HEK293T (cell line): ENCODE measurements at regions of chr5 and their contacts with region 1.

Region 1: GRCh38 chr5:149828161-149828884 is 98.2 kb downstream of the PPARGC1B start:
- DNase-seq: peak; percentile 78

Region 2: GRCh38 chr5:149636851-149637246 is 191.5 kb before region 1 on chr5:
- CTCF ChIA-PET with region 1: interaction called, 19 read pairs
- POLR2A ChIA-PET with region 1: no interaction called
- DNase-seq: peak; percentile 76

Region 3: DNA sequence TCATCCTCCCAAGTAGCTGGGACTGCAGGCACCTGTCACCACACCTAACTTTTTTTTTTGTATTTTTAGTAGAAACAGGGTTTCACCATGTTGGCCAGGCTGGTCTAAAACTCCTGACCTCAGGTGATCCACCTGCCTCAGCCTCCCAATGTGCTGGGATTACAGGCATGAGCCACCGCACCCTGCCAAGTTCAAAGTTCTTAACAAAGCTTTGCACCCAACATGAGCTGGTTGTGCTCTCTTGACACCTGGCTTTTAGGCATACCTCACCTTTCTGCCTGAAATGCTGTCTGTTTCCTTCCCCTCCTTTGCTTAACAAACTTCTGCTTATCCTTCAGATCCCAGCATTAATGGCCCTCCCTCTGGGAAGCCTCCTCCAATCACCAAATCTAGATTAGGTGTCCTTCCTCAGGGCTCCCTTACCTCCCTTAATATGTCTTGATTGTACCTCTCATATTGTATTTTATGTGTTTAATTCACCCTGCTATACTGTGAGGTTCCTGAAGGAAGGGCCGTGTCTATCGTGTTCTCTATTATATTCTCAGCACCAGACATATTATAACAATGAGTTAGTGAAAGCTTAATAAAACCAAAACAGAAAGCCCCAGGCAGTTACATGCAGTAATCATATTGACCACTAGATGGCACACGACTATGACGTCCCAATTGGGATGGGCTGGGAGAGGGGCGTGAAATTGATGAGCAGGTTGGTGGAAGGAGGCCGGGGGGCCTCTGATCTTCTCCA is 161.1 kb before region 1 on chr5:
- CTCF ChIA-PET with region 1: interaction called, 24 read pairs
- POLR2A ChIA-PET with region 1: no interaction called
- DNase-seq: peak; percentile 57

Region 4: GRCh38 chr5:149809931-149810617 is 18.2 kb before region 1 on chr5:
- CTCF ChIA-PET with region 1: no interaction called
- POLR2A ChIA-PET with region 1: no interaction called
- DNase-seq: no peak